Dendritic cell treated with granulocyte-macrophage colony-stimulating factor and Interleukin-4, amounts not matched to agents 40 ng/mL and 50 ng/mL, for 4 days (primary cell): ENCODE measurements at regions of chr11 and their contacts with region 1.

Region 1: GRCh38 chr11:129785383-129786111 is 30.1 kb upstream of the TMEM45B start:
- H3K4me3 Mint-ChIP-seq: no peak overlapping the region
- H3K27ac Mint-ChIP-seq: no peak overlapping the region
- H3K4me1 Mint-ChIP-seq: peaks cover 20% of the 10 kb centered on the region
- H3K27me3 Mint-ChIP-seq: peaks cover 1% of the 10 kb centered on the region

Region 2: DNA sequence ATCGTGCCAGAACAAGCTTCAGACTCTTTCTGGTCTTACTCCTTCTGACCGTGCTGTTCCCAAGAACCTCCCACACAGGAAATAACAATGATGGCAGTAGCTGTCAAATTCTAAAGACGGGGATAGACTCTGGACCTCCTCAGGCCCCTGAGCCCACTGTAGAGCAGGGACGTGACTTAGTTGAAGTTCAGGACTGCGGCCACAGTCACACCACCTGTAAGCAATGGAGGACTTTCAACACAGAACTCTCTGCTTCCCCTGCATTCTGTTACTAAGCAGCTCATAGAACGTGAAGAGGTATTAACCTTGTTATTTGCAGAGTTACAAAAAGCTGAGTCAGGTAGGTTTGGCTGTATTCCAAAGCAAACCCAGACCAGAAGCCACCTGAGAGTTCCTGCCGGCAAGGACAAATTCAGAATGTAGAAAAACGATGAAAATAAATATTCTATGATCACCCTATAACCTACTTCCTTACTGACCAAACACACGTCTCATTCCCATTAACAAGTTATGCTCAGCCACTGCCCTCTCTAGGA is 42.8 kb after region 1 on chr11:
- intact Hi-C with region 1: loop called (anchors 5 kb)
- H3K4me3 Mint-ChIP-seq: no peak overlapping the region
- H3K27ac Mint-ChIP-seq: peak overlapping the region; percentile 53
- H3K4me1 Mint-ChIP-seq: peaks cover 27% of the 10 kb centered on the region
- H3K27me3 Mint-ChIP-seq: no peaks in the 10 kb centered on the region

Region 3: GRCh38 chr11:129853518-129854236 is 68.1 kb after region 1 on chr11:
- intact Hi-C with region 1: no loop called
- H3K4me3 Mint-ChIP-seq: no peak overlapping the region
- H3K27ac Mint-ChIP-seq: peak overlapping the region; percentile 52
- H3K4me1 Mint-ChIP-seq: peaks cover 4% of the 10 kb centered on the region
- H3K27me3 Mint-ChIP-seq: no peaks in the 10 kb centered on the region